ENCODE measurements at regions of chr5 and their contacts with region 1.

Region 1: DNA sequence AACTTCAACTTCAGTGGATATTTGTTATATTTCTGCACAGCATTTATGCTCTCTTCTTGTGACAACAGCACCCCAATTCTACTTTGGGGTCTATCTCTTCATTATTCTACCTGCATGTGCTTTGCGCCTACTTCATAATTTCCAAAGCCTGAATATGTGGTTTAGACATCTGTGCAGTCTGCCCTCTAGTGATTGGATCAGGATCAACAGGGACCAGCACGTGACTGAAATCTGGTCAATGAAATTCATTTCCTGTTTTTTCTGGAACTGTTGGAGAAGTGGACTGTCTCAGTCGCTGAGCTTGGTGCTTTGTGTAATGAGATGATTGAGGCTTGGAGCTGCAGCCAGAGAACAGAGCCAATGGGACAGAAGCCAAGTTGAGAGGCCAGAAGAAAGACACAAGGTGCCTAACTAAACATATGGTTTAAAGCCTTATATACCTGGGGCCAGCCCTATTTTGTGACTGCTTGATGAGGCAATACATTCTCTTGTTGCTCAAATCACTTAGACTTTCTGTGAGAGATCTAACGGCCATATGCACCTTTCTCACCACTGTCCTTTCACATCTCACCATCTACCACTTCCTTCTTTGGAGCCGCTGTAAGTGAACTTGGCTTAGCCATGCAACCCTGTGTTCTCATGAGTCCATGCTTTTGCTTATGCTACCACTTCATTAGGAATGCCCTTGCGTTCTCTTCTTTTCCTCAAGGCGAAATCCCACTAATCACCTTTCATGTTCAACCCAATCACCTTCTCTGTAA is 68.8 kb upstream of the PPP2R2B start:
- DNase-seq: no peak

Region 2: GRCh38 chr5:146565764-146566367 is 381.5 kb before region 1 on chr5:
- intact Hi-C with region 1: loop called (anchors 5 kb)
- DNase-seq: no peak

Region 3: DNA sequence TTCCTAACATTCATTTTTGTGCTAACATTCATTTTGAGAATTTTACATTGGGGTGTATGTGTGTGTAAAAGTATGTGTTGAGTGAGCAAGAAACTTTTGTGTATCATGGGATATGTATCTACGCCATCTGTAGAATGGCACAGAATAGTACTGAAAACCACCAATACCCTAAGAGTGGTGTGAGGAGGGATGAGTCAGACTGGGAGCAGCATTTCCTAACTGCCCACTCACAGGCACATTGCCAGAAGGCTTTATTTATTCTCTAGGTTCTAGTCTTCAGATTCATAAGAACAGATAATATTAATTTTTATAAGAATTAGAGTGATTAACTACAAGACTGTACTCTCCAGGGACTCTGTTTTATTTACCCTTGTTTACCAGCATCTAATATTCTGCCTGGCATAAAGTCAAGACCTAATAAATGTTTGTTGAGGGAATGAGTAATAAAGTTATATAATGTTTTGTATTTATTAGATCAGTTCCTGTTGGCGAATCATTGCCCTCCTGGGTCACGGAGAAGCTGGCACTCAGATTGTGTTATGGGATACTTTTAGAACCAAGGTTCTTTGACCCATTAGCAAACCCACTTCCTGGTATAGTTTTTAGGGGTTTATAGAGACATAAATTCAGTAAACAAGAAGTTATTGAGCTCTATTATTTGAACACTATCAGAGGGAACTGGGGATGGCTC is 90.3 kb after region 1 on chr5:
- intact Hi-C with region 1: no loop called
- DNase-seq: no peak